Stomach (tissue), 19 donors: ENCODE measurements at regions of chr20 and their contacts with region 1.

Region 1: DNA sequence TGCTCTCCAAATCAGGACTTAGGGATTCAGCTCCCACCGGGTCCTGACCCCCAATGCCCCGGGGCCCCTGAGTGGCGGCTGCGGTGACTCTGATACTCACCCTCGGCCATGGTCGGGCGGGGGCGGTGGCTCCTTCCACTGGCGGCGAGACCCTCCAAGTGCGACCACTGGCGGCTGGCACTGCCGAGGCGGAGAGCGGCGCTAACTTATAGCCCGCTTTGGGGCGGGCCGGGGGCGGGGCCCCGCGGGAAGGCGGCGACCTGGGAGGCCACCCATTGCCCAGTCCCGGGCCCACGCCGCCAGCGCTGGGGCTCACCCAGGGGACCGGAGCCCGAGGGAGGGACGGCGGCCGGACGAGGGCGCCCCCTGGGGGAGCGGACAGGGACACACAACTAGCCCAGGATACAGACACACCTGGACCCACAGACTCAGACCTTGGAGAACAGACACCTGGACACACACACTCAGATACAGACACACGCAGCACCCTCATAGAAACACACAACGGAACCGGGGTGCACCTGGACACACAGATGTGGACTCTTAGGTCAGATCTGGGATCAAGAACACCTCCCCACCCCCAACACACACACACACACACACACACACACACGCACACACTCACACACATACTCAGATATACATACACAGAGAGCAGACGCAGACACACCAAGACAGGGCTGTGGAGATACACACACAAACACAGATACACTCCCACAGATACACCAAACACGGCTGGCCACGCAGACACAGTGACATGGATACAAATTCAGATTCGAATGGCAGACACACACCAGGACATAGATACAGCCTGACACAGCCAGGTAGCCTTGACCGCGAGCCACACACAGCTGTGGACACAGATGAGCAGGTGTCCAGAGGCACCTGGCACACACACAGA is at the start of gene TGM2:
- DNase-seq: peak; percentile 87 to 94
- H3K4me3 ChIP-seq: peak within 1 kb of the TSS; percentile 46 to 56 (median 54)
- H3K27ac ChIP-seq: peak within 1 kb of the TSS; percentile 31 to 85 (median 73)
- H3K4me1 ChIP-seq: peaks cover 29 to 92% (median 54%) of the 10 kb centered on the region in 4 donors
- H3K27me3 ChIP-seq: no peaks in the 10 kb centered on the region
- CTCF ChIP-seq: peak in 5 of 7 experiments; percentile 85 to 95 (median 89)
- EP300 ChIP-seq: no peak
- POLR2A ChIP-seq: no peak
- total RNA-seq, gene TGM2: 27.8 to 195 (median 44.3) TPM

Region 2: GRCh38 chr20:38073307-38074071 is 91.8 kb before region 1 on chr20:
- intact Hi-C with region 1: loop called (anchors 5 kb)
- DNase-seq: peak; percentile 28 to 84
- H3K4me3 ChIP-seq: no peak overlapping the region
- H3K27ac ChIP-seq: peak overlapping the region; percentile 32 to 83 (median 69)
- H3K4me1 ChIP-seq: peaks cover 21 to 50% (median 33%) of the 10 kb centered on the region in 4 donors
- H3K27me3 ChIP-seq: no peaks in the 10 kb centered on the region
- CTCF ChIP-seq: peak in 5 of 7 experiments; percentile 68 to 79 (median 73)
- EP300 ChIP-seq: no peak
- POLR2A ChIP-seq: no peak

Region 3: DNA sequence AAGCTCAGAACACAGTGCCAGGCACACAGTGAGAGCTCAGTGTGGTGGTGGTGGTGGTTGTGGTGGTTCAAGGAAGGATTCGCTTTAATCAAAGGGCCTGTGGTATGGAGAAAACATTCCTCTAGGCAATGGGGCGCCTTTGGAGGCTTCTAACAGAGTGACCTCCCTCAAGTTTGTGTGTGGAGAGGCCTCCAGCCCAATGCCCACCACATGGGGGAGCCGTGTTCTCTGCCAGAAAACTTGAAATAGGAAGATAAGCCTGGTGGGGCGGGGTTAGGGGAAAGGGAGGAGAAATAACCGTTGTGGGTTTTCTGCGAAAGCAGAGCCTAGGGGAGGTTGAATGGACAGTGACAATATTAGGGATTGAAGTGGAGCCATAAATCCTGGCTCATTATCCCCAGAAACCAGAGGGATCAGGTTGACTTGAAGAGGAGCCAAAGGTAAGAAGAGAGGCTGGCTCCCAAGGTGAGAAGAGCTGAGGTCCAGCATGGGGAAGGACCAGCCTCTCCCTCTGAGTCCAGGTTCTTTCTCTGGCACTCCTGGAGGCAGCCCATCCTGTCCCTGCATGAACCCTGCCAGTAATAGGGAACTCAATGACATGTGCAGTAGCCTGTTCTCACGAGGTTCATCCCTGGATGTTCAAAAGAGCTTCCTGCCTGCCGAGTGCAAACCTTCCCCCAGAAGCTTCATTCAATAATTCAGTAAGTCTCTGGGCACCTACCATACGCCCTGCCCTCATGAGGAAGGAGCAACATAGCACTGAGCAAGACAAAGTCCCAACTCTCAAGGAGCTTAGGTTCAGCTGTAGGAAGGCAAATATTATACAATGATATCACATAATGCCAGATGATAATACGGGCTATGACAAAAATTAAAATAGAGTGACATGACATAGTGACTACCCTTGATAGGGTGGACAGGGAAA is 51.7 kb before region 1 on chr20:
- intact Hi-C with region 1: no loop called
- DNase-seq: peak in 1 of 2 donors; percentile 67
- H3K4me3 ChIP-seq: no peak overlapping the region
- H3K27ac ChIP-seq: no peak overlapping the region
- H3K4me1 ChIP-seq: peaks cover 15 to 34% (median 24%) of the 10 kb centered on the region in 4 donors
- H3K27me3 ChIP-seq: no peaks in the 10 kb centered on the region
- CTCF ChIP-seq: peak in 1 of 7 experiments; percentile 10
- EP300 ChIP-seq: no peak
- POLR2A ChIP-seq: no peak

Region 4: DNA sequence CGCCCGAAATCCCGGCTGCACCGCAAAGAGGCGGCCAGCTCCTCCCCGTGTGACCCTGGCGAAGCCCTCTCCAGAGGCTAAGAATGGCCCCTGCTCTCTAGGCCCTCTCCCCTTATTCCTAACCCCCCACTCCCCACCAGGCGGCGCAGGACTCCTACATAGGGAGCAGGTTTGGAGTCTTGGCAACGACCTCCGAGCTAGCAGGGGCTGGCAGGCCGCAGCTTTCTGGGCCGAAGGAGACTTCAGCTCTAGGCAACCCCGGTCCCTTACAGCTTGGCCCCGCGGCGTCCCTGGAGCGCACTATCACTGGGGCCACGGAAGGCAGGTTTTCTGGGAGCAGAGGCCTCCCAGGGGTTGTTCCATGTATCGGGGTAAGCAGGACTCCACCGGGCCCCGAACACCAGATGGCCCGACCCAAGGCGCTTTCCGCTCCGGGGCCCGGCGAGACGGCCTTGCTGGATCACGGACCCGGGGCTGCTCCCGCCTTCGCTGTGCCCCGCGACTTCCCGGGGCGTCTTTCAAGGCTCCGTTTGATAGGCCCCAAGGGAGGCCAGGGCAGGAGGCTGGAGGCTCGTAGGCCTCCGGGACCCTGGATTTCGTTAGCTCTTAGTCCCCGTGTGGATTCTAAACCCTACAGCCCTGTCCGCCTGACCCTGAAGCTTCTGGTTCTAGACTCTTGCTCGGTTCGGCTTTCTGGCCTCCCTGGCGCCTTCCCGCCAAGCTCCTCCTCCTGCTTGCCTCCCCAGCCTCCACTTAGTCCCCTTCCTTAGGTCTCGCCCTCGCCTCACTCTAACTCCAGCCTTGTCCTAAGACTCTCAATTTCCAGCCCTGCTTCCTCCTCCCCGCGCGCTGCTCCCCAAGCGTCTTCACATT is 560.8 kb after region 1 on chr20:
- intact Hi-C with region 1: no loop called
- DNase-seq: peak; percentile 33 to 63
- H3K4me3 ChIP-seq: no peak overlapping the region
- H3K27ac ChIP-seq: no peak overlapping the region
- H3K4me1 ChIP-seq: peaks cover 21 to 74% (median 47%) of the 10 kb centered on the region in 4 donors
- H3K27me3 ChIP-seq: peaks cover 77 to 100% (median 100%) of the 10 kb centered on the region in 3 donors
- CTCF ChIP-seq: peak in 2 of 7 experiments; percentile 8 to 10
- EP300 ChIP-seq: no peak
- POLR2A ChIP-seq: no peak